Mammary epithelial cell (primary cell): ENCODE measurements at regions of chr9 and their contacts with region 1.

Region 1: DNA sequence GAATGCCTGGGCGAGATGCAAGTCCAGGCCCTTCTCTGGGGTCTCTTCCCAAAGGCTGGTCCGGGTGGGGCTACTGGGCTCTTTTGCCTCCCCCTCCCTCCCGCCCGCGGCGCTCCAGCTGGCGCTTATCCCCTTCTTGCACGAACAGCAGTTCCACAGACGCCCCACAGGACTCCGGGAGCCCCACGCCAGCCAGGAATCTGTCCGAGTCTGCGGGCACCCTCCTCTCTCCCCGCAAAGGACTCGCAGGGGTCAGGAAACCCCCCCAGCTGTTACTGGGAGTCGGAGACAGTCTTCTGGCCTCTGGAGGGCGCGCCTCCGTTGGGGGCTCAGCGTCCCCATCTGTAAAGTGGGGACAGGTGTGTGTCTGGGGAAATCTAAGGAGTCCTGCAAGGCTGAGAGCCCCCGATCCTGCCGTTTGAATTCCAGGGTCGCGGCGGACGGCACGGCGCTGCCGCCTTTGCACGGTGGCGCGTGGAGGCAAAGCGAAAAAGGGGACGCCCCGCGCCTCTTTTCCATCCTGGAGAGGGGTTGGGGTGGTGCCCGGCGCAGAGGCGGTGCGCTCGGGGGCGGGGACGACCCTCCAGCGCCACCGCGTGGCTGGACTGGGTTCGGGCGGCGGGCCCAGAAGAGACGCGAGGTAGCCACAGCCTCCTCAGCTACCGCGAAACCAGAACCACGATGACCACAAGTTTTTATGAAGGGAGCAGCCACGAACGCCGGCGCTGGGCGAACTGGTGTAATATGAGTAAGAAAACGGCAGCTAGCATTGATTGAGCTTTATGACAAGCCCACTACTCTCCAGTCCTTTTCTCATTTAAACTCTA is 2.9 kb upstream of the CCIN start:
- DNase-seq: peak; percentile 71
- H3K4me3 ChIP-seq: peak overlapping the region; percentile 18 to 38 (median 25)
- H3K27ac ChIP-seq: no peak overlapping the region
- H3K4me1 ChIP-seq: peaks cover 5% of the 10 kb centered on the region
- H3K27me3 ChIP-seq: no peaks in the 10 kb centered on the region
- CTCF ChIP-seq: peak; percentile 58 to 88

Region 2: GRCh38 chr9:36136272-36136893 is 29.9 kb before region 1 on chr9 and contains the start of gene GLIPR2:
- CTCF ChIA-PET with region 1: no interaction called
- dilution Hi-C with region 1: no loop called
- in situ Hi-C with region 1: no loop called
- intact Hi-C with region 1: loop called (anchors 2 kb)
- DNase-seq: peak; percentile 66
- H3K4me3 ChIP-seq: peak within 1 kb of the TSS; percentile 43 to 56 (median 53)
- H3K27ac ChIP-seq: no peak within 1 kb of the TSS
- H3K4me1 ChIP-seq: peaks cover 12% of the 10 kb centered on the region
- H3K27me3 ChIP-seq: no peaks in the 10 kb centered on the region
- CTCF ChIP-seq: no peak
- total RNA-seq, gene GLIPR2: 1.2 to 2.1 TPM